PC-9 (cell line): ENCODE measurements at regions of chr4 and their contacts with region 1.

Region 1: DNA sequence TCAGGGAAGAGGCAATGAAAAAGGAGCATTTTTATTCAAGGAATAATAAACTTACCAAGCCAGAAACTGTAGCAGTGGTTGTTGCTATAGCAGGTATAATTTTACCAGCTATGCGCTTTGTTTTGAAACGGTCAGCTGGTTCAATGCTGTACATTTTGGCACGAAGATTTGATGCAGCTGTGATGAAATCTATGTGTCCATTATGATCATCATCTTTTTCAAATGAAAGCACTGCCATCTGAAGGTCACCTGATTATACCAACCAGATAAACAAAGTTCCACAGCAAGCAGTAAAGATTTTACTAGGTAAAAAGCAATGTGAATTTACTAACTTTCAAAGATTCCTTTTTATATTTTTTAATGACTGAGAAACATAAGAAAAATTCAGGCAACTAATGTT is 66.4 kb downstream of the STAP1 start:
- DNase-seq: no peak
- H3K4me3 ChIP-seq: no peak overlapping the region
- H3K27ac ChIP-seq: no peak overlapping the region
- H3K4me1 ChIP-seq: no peaks in the 10 kb centered on the region
- H3K27me3 ChIP-seq: no peaks in the 10 kb centered on the region
- CTCF ChIP-seq: no peak

Region 2: DNA sequence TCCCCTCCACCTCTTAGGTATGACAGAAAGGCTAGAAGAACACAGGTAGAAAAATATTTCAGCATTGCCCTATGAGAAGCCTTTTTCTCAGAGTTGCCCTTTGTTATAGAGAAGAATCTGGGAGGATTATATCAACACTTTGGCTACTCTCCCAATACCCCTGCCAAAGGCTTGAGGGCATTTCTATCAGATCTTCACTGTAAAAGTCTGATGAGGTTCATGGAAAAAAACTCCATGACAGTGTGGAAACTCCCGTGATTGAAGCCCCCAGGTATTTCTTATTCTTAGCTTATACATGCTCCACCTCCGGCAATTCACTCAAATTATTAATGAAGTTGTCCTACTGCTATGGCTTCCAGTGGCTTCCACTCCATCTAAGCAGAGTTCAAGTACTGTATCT is 833.3 kb before region 1 on chr4:
- CTCF ChIA-PET with region 1: no interaction called
- POLR2A ChIA-PET with region 1: no interaction called
- intact Hi-C with region 1: no loop called
- DNase-seq: no peak
- H3K4me3 ChIP-seq: no peak overlapping the region
- H3K27ac ChIP-seq: no peak overlapping the region
- H3K4me1 ChIP-seq: no peaks in the 10 kb centered on the region
- H3K27me3 ChIP-seq: no peaks in the 10 kb centered on the region
- CTCF ChIP-seq: no peak

Region 3: GRCh38 chr4:67542076-67542475 is 82.9 kb before region 1 on chr4:
- CTCF ChIA-PET with region 1: no interaction called
- POLR2A ChIA-PET with region 1: no interaction called
- intact Hi-C with region 1: no loop called
- DNase-seq: no peak
- H3K4me3 ChIP-seq: no peak overlapping the region
- H3K27ac ChIP-seq: no peak overlapping the region
- H3K4me1 ChIP-seq: peaks cover 9% of the 10 kb centered on the region
- H3K27me3 ChIP-seq: no peaks in the 10 kb centered on the region
- CTCF ChIP-seq: no peak

Region 4: GRCh38 chr4:67603310-67604028 is 21.5 kb before region 1 on chr4:
- CTCF ChIA-PET with region 1: no interaction called
- POLR2A ChIA-PET with region 1: interaction called, 21 read pairs
- intact Hi-C with region 1: no loop called
- DNase-seq: no peak
- H3K4me3 ChIP-seq: no peak overlapping the region
- H3K27ac ChIP-seq: no peak overlapping the region
- H3K4me1 ChIP-seq: no peaks in the 10 kb centered on the region
- H3K27me3 ChIP-seq: no peaks in the 10 kb centered on the region
- CTCF ChIP-seq: no peak

Region 5: DNA sequence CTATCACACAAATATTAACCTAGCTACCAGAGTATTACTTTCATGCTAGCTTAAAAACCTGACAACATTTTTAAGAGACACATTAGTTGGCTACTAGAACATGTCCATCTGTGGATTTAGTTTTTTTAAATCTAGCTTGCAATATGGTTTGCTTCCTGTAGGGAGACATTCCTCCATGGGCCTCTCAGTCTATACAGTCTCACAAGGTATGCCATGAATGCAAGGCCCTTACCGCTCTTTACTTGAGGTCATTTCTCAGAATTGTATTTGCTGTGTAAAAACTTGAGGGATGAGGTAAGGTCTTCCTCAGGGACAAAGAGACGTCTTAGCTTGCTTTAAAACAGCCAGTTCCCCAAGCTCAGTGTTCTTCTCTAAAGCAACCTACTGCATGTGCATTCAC is 49.2 kb after region 1 on chr4:
- CTCF ChIA-PET with region 1: no interaction called
- POLR2A ChIA-PET with region 1: no interaction called
- intact Hi-C with region 1: loop called (anchors 10 kb)
- DNase-seq: no peak
- H3K4me3 ChIP-seq: no peak overlapping the region
- H3K27ac ChIP-seq: no peak overlapping the region
- H3K4me1 ChIP-seq: no peaks in the 10 kb centered on the region
- H3K27me3 ChIP-seq: no peaks in the 10 kb centered on the region
- CTCF ChIP-seq: no peak